GM12878 (cell line): ENCODE measurements at regions of chr22 and their contacts with region 1.

Region 1: GRCh38 chr22:25791556-25791955 is 49.6 kb downstream of the MYO18B start:
- DNase-seq: no peak
- ATAC-seq: no peak
- H3K4me3 ChIP-seq: no peak overlapping the region
- H3K27ac ChIP-seq: no peak overlapping the region
- H3K4me1 ChIP-seq: no peaks in the 10 kb centered on the region
- H3K27me3 ChIP-seq: no peaks in the 10 kb centered on the region; a peak in 1 of 4 replicates
- CTCF ChIP-seq: no peak
- EP300 ChIP-seq: no peak
- POLR2A ChIP-seq: no peak
- RAD21 ChIP-seq: no peak

Region 2: DNA sequence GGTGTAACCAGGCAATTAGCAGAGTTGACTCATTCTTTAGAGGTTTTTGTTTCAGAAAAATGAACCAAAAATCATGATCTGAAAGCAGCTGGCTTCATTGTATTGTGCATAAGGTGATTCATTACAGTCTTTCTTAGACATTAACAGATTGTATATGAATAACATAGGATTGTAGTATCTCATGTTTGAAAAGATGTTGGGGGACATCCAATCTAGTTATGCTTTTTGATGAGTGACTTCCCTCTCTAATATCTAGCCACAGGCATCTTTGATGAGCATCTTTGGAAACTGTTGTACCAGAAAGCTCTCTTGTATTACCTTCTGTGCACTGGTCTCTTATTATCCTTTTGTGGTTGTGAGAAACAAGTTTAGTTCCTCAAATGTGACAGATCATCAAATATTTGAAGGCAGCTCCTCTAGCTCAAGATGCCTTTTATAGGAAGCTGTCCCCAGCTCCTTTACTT is 218.8 kb before region 1 on chr22:
- CTCF ChIA-PET with region 1: no interaction called
- POLR2A ChIA-PET with region 1: no interaction called
- RAD21 ChIA-PET with region 1: no interaction called
- SMC1A ChIA-PET with region 1: no interaction called
- in situ Hi-C with region 1: no loop called
- intact Hi-C with region 1: no loop called
- DNase-seq: peak; percentile 80
- ATAC-seq: peak; percentile 81
- H3K4me3 ChIP-seq: 0 out of 2 replicates have a peak overlapping the region, but pooled peaks have one; percentile 0
- H3K27ac ChIP-seq: peak overlapping the region; percentile 64
- H3K4me1 ChIP-seq: peaks cover 28% of the 10 kb centered on the region
- H3K27me3 ChIP-seq: no peaks in the 10 kb centered on the region
- CTCF ChIP-seq: no peak
- EP300 ChIP-seq: peak; percentile 84 to 92
- POLR2A ChIP-seq: no peak
- RAD21 ChIP-seq: no peak

Region 3: GRCh38 chr22:25741692-25742626 is 49.6 kb before region 1 on chr22 and contains the start of gene MYO18B:
- CTCF ChIA-PET with region 1: no interaction called
- POLR2A ChIA-PET with region 1: no interaction called
- RAD21 ChIA-PET with region 1: no interaction called
- SMC1A ChIA-PET with region 1: no interaction called
- in situ Hi-C with region 1: loop called (anchors 5 kb)
- intact Hi-C with region 1: no loop called
- DNase-seq: no peak
- ATAC-seq: no peak
- H3K4me3 ChIP-seq: no peak within 1 kb of the TSS
- H3K27ac ChIP-seq: no peak within 1 kb of the TSS
- H3K4me1 ChIP-seq: no peaks in the 10 kb centered on the region
- H3K27me3 ChIP-seq: no peaks in the 10 kb centered on the region
- CTCF ChIP-seq: no peak
- EP300 ChIP-seq: no peak
- POLR2A ChIP-seq: no peak
- RAD21 ChIP-seq: no peak
- polyA plus RNA-seq, gene MYO18B: 0.05 TPM in 1 of 2 experiments, not detected in the other